GM12878 (cell line): ENCODE measurements at regions of chr12 and their contacts with region 1.

Region 1: DNA sequence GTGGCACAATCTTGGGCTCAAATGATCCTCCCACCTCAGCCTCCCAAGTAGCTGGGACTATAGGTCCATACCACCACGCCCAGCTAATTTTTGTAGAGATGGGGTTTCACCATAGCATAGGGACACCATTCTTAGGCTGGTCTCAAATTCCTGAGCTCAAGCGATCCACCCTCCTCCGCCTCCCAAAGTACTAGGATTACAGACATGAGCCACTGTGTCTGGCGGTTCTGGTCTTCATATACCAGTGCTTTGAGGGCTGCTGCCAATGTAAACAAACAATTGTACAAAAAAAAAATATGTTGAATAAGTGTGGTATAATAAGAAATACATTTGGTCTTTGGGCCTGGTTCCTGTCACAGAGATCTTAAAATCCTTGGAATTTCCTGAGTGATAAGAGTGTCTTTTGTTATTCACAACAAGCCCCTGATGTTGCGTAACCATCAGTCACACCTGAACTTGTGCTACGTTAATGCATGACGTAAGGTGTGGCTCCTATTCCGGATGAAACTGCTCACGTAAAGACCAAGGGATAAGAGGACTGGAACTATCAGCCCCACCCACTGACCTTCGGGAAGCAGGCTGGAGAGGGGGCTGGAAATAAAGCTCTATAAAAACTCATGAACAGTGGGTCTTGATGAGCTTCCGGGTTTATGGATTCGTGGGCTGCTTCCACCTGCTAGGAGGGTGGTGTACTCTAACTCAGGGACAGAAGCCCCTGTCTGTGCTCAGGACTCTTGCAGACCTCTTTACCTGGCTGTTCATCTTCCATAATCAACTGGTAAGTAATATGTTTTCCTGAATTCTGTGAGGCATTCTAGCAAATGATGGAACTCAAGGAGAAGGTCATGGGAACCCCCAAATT is 16.5 kb upstream of the RIMKLB start:
- DNase-seq: no peak
- ATAC-seq: no peak
- H3K4me3 ChIP-seq: no peak overlapping the region
- H3K27ac ChIP-seq: no peak overlapping the region
- H3K4me1 ChIP-seq: no peaks in the 10 kb centered on the region
- H3K27me3 ChIP-seq: no peaks in the 10 kb centered on the region
- CTCF ChIP-seq: no peak
- EP300 ChIP-seq: no peak
- POLR2A ChIP-seq: no peak
- RAD21 ChIP-seq: no peak

Region 2: DNA sequence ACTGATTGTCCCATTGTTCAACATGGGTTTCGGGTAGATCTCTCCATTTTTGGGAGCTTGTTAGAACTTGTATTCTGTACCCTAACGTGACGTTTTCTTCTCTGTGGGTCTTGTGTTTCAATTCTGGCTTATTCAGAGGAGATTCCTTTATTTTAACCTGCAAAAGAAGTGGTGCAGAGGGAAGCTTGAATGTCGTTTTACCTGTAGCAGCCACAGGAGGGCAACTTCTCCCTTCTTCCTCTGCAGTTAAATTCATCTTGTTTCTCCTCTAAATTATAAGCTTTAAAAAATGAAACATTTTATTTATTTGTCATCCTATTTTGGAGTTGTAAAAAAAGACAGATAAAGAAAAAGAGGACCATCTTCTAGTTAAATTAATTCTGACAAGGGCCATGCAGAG is 181.7 kb before region 1 on chr12:
- CTCF ChIA-PET with region 1: no interaction called
- POLR2A ChIA-PET with region 1: no interaction called
- RAD21 ChIA-PET with region 1: no interaction called
- SMC1A ChIA-PET with region 1: no interaction called
- in situ Hi-C with region 1: no loop called
- intact Hi-C with region 1: no loop called
- DNase-seq: no peak
- ATAC-seq: no peak
- H3K4me3 ChIP-seq: no peak overlapping the region
- H3K27ac ChIP-seq: no peak overlapping the region
- H3K4me1 ChIP-seq: no peaks in the 10 kb centered on the region
- H3K27me3 ChIP-seq: peaks cover 0 to 4% of the 10 kb centered on the region in 2 experiments; a peak in 1 of 4 replicates
- CTCF ChIP-seq: no peak
- EP300 ChIP-seq: no peak
- POLR2A ChIP-seq: no peak
- RAD21 ChIP-seq: no peak

Region 3: DNA sequence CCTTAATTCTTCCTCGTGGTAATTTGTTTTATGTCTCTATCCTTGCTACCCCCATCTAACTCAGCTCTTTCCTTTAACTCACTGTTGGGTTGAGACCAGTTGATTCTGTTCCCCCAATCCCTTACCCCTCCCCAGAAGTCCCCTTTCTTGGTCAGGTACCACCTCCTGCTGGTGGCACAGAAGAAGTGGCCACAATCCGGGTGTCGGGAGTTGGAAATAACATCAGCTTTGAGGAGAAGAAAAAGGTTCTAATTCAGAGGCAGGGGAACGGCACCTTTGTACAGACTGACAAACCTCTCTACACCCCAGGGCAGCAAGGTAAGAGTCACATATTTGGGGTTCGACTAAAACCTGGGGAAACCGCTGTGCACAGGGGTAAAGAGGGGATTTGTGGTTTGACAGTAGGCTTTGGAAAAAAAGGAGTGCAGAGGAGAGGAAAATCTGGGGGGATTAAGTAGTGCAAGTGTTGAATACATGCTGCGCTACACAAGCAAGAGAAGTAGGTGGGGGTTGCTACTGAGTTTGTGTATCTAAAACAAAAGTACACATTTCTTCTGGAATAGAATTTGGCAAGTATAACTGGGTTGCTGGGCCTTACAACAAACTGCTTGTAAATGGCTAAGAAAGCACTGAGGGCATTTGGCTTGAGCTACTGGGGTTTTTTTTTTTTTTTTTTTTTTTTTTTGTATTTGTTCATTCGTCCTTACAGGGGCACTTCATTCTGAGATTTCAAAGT is 142.5 kb after region 1 on chr12:
- CTCF ChIA-PET with region 1: interaction called, 5 read pairs
- POLR2A ChIA-PET with region 1: no interaction called
- RAD21 ChIA-PET with region 1: no interaction called
- SMC1A ChIA-PET with region 1: no interaction called
- in situ Hi-C with region 1: no loop called
- intact Hi-C with region 1: loop called (anchors 5 kb)
- DNase-seq: no peak
- ATAC-seq: no peak
- H3K4me3 ChIP-seq: no peak overlapping the region
- H3K27ac ChIP-seq: no peak overlapping the region
- H3K4me1 ChIP-seq: no peaks in the 10 kb centered on the region
- H3K27me3 ChIP-seq: 0 out of 4 replicates have a peak, but pooled peaks cover 0 to 3% of the 10 kb centered on the region in 2 experiments
- CTCF ChIP-seq: peak; percentile 3 to 32 (median 19); a peak in 2 of 6 replicates
- EP300 ChIP-seq: no peak
- POLR2A ChIP-seq: no peak
- RAD21 ChIP-seq: peak; percentile 70